ENCODE measurements at regions of chr19 and their contacts with region 1.

Region 1: DNA sequence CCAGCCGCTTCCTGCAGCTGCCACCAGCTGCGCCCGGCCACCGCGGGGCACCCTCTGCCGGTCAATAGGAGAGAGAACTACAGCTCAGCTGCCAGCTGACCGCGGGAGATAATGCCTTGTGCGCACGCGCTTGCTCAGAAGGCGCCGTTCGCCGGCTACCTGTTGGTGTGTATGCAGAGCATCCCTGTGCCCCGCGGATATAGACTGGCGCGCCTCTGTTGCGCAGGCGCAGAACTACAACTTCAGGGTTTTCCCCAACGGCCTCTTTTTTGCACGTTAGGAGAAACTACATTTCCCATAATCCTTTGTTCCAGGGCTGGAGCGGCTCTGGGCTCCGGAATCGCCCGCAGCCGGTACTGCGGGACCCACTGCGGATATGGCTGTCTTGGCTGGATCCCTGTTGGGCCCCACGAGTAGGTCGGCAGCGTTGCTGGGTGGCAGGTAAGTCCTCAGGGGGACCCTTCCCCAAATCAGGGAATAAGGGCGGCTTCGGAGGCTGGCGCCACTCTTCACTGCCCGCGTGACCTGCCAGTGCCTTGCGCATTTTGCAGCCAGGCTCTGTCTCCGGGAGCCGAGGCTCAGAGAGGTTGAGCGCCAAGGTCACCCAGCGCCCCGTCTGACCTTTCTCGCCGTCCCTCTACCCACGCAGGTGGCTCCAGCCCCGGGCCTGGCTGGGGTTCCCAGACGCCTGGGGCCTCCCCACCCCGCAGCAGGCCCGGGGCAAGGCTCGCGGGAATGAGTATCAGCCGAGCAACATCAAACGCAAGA is at the start of gene MRPL34:
- DNase-seq: peak; percentile 97
- H3K4me3 Mint-ChIP-seq: peak within 1 kb of the TSS; percentile 89
- H3K27ac Mint-ChIP-seq: peak within 1 kb of the TSS; percentile 88
- H3K4me1 Mint-ChIP-seq: peaks cover 48% of the 10 kb centered on the region
- H3K27me3 Mint-ChIP-seq: no peaks in the 10 kb centered on the region
- total RNA-seq, gene MRPL34: 84.2 to 92.2 TPM

Region 2: GRCh38 chr19:16542045-16542909 is 763.4 kb before region 1 on chr19 and contains the start of gene CHERP:
- CTCF ChIA-PET with region 1: no interaction called
- intact Hi-C with region 1: loop called (anchors 1 kb)
- DNase-seq: peak; percentile 94
- H3K4me3 Mint-ChIP-seq: peak within 1 kb of the TSS; percentile 95
- H3K27ac Mint-ChIP-seq: peak within 1 kb of the TSS; percentile 92
- H3K4me1 Mint-ChIP-seq: peaks cover 63% of the 10 kb centered on the region
- H3K27me3 Mint-ChIP-seq: no peaks in the 10 kb centered on the region
- total RNA-seq, gene CHERP: 54.4 to 54.7 TPM

Region 3: GRCh38 chr19:17075035-17075863 is 230.5 kb before region 1 on chr19 and contains the starts of genes HAUS8 and MYO9B:
- CTCF ChIA-PET with region 1: no interaction called
- intact Hi-C with region 1: loop called (anchors 1 kb)
- DNase-seq: peak; percentile 100
- H3K4me3 Mint-ChIP-seq: peak within 1 kb of the TSS; percentile 100
- H3K27ac Mint-ChIP-seq: peak within 1 kb of the TSS; percentile 98
- H3K4me1 Mint-ChIP-seq: peaks cover 55% of the 10 kb centered on the region
- H3K27me3 Mint-ChIP-seq: no peaks in the 10 kb centered on the region
- total RNA-seq, gene HAUS8: 47.3 to 48.8 TPM
- total RNA-seq, gene MYO9B: 73.1 to 78.6 TPM

Region 4: DNA sequence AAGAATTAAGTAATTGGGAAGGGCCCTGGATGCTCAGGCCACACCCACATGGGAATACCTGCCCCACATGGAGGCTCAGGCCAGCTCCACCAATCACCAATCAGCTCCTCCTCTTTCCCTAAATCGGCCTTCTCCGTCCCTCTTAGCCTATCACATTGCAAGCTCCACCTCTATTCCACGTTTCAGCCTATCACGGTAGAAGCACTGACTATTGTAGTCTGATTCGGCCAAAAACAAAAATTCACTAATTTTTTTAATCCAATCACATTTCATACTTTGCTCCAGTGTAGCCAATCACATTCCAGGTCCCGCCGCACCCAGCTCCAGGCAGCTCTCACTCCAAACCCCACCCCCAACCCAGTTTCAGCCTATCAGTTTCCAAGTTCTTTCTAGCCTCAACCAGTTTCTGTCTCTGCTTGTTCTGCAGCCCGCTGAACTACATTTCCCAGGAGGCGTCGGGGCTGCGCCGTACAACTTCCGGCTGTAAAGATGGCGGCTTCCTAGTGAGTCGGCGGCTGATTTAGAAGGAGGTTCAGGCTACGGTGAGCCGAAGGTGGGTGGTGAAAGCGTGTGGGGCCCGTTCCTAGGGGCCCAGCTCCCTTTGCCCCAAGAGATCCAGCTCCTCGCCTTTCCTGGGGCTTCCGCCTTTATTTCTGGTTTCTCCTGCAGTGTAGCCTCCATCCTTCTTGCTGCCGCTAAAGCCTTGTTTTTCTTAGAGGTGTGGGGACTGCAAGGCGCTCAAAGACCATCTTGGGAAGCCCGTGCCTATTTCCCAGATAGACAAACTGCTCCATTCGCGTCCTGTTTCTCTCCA is 38.5 kb before region 1 on chr19 and contains the start of gene BABAM1:
- CTCF ChIA-PET with region 1: interaction called, 3 read pairs
- intact Hi-C with region 1: loop called (anchors 1 kb)
- DNase-seq: peak; percentile 99
- H3K4me3 Mint-ChIP-seq: peak within 1 kb of the TSS; percentile 87
- H3K27ac Mint-ChIP-seq: peak within 1 kb of the TSS; percentile 85
- H3K4me1 Mint-ChIP-seq: peaks cover 20% of the 10 kb centered on the region
- H3K27me3 Mint-ChIP-seq: no peaks in the 10 kb centered on the region
- total RNA-seq, gene BABAM1: 108 to 109 TPM

Region 5: GRCh38 chr19:17327651-17328516 is 22.2 kb after region 1 on chr19:
- CTCF ChIA-PET with region 1: interaction called, 4 read pairs
- intact Hi-C with region 1: loop called (anchors 1 kb)
- DNase-seq: peak; percentile 58
- H3K4me3 Mint-ChIP-seq: peak overlapping the region; percentile 56
- H3K27ac Mint-ChIP-seq: no peak overlapping the region
- H3K4me1 Mint-ChIP-seq: peaks cover 8% of the 10 kb centered on the region
- H3K27me3 Mint-ChIP-seq: no peaks in the 10 kb centered on the region

Region 6: GRCh38 chr19:17419621-17420466 is 114.1 kb after region 1 on chr19 and contains the start of gene MVB12A:
- CTCF ChIA-PET with region 1: no interaction called
- intact Hi-C with region 1: loop called (anchors 1 kb)
- DNase-seq: peak; percentile 98
- H3K4me3 Mint-ChIP-seq: peak within 1 kb of the TSS; percentile 87
- H3K27ac Mint-ChIP-seq: peak within 1 kb of the TSS; percentile 87
- H3K4me1 Mint-ChIP-seq: peaks cover 16% of the 10 kb centered on the region
- H3K27me3 Mint-ChIP-seq: no peaks in the 10 kb centered on the region
- total RNA-seq, gene MVB12A: 29.3 to 32.1 TPM

Region 7: GRCh38 chr19:17511724-17512573 is 206.2 kb after region 1 on chr19:
- CTCF ChIA-PET with region 1: no interaction called
- intact Hi-C with region 1: loop called (anchors 5 kb)
- DNase-seq: peak; percentile 85
- H3K4me3 Mint-ChIP-seq: peak overlapping the region; percentile 93
- H3K27ac Mint-ChIP-seq: peak overlapping the region; percentile 73
- H3K4me1 Mint-ChIP-seq: peaks cover 37% of the 10 kb centered on the region
- H3K27me3 Mint-ChIP-seq: no peaks in the 10 kb centered on the region

Region 8: DNA sequence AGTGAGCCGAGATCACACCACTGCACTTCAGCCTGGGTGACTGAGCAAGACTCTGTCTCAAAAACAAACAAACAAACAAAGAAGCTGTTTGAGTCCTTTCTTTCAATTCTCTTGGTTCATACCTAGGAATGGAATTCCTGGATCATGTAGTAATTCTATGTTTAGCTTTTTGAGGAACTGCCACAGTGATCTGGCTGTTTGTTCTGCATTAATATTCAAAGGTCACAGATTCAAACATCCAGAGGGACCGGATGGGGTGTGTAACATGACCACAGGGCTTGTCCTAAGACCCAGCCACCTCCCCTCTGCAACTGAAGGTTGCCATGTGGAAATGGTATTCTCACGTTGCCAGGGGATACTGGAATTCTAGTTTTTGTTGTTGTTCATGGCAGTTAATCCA is 259.9 kb after region 1 on chr19:
- CTCF ChIA-PET with region 1: no interaction called
- intact Hi-C with region 1: no loop called
- DNase-seq: no peak
- H3K4me3 Mint-ChIP-seq: no peak overlapping the region
- H3K27ac Mint-ChIP-seq: no peak overlapping the region
- H3K4me1 Mint-ChIP-seq: no peaks in the 10 kb centered on the region
- H3K27me3 Mint-ChIP-seq: no peaks in the 10 kb centered on the region